RWPE1 (cell line): ENCODE measurements at regions of chr19 and their contacts with region 1.

Region 1: GRCh38 chr19:17385878-17386611 is 8.0 kb downstream of the CCDC194 start:
- DNase-seq: peak; percentile 66
- H3K27ac ChIP-seq: no peak overlapping the region
- CTCF ChIP-seq: peak; percentile 95

Region 2: DNA sequence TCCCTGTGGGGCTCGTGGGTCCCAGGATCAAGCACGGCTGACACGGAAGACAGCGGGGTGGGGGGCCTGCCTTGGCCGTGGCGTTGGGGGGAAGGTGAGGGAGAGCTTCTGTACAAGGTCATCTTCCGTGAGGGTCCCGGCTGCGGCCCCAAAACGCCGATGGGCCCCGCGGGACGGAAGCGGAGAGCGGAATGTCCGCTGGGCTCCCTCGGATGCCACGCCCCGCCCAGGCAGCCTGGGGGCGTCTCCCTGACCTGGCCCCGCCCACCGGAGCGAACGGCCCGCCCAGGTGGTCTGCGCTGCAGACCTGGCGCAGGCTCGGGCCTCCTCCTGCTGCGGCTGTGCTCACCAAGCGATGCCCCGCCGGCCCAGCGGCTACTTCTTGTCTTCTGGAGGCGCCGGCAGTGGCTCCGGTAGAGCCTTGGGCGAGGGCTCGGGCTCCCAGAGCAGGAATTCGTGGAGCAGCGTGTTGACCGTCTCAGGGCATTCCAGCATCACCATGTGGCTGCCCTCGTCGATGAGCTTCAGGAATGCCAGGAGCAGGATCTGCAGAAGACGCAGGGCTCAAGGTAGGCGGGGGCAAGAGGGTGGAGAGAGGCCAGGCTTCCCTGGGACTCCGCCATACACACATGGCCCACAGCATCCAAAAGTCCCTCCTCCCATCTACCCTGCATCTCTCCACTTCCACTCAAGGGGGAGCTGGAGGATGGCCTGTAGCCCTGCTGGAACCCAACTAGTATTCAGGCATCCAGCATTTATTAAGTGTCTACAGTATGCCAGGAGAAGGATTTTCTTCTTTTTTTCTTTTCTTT is 93.6 kb before region 1 on chr19:
- CTCF ChIA-PET with region 1: interaction called, 11 read pairs
- POLR2A ChIA-PET with region 1: no interaction called
- DNase-seq: peak; percentile 96
- H3K27ac ChIP-seq: peak overlapping the region; percentile 91
- CTCF ChIP-seq: peak; percentile 95

Region 3: GRCh38 chr19:17348700-17349099 is 37.3 kb before region 1 on chr19:
- CTCF ChIA-PET with region 1: interaction called, 12 read pairs
- POLR2A ChIA-PET with region 1: no interaction called
- DNase-seq: no peak
- H3K27ac ChIP-seq: peak overlapping the region; percentile 49
- CTCF ChIP-seq: no peak

Region 4: GRCh38 chr19:17496337-17496997 is 110.4 kb after region 1 on chr19:
- CTCF ChIA-PET with region 1: no interaction called
- POLR2A ChIA-PET with region 1: no interaction called
- DNase-seq: peak; percentile 66
- H3K27ac ChIP-seq: peak overlapping the region; percentile 27
- CTCF ChIP-seq: peak; percentile 94